ENCODE measurements at regions of chr2 and their contacts with region 1.

Region 1: GRCh38 chr2:175251425-175252041 is 70.0 kb upstream of the ATP5MC3 start:
- DNase-seq: no peak
- H3K4me3 ChIP-seq: no peak overlapping the region
- H3K27ac ChIP-seq: no peak overlapping the region
- H3K27me3 ChIP-seq: peaks cover 14% of the 10 kb centered on the region
- CTCF ChIP-seq: peak; percentile 76

Region 2: DNA sequence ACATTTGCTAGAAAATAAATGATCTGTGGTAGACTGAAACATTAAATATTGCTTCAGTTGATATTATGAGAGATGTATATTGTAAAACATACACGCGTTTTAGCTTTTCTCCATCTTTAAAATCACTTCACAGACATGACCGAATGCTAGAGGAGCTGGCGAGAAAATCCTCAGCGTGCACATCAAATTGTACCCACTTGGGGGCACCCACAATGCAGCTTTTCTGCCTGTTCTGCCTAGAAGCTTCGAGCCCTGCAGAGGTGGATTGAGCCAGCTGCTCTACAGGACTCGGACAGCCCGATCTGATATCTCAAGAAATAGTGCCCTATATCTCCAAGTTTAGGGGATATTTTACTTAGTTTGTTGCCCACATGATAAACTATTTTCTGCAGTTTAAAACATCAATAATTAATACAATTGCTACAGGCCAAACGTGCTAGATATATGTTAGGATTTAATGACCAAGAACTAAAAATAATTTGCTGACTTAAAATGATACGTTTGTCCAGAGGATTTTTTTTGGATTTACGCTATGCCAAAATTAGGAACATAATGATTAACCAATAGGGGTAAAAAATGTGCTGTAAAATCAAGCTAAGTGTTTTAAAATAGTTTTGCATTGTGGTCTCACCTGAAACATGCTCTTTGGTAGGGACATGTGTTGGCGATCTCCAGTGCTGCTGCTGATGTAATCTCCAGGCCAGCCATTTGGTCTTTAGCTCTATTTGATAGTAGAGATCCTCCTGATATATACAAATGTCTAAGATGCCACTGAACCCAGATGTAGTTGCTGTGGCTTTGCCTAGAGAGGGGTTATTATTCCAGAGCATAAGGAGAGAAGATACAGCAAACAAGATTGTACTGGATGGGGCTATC is 47.7 kb before region 1 on chr2:
- CTCF ChIA-PET with region 1: interaction called, 42 read pairs
- POLR2A ChIA-PET with region 1: no interaction called
- DNase-seq: peak; percentile 24
- H3K4me3 ChIP-seq: no peak overlapping the region
- H3K27ac ChIP-seq: no peak overlapping the region
- H3K27me3 ChIP-seq: peaks cover 6% of the 10 kb centered on the region
- CTCF ChIP-seq: peak; percentile 76

Region 3: DNA sequence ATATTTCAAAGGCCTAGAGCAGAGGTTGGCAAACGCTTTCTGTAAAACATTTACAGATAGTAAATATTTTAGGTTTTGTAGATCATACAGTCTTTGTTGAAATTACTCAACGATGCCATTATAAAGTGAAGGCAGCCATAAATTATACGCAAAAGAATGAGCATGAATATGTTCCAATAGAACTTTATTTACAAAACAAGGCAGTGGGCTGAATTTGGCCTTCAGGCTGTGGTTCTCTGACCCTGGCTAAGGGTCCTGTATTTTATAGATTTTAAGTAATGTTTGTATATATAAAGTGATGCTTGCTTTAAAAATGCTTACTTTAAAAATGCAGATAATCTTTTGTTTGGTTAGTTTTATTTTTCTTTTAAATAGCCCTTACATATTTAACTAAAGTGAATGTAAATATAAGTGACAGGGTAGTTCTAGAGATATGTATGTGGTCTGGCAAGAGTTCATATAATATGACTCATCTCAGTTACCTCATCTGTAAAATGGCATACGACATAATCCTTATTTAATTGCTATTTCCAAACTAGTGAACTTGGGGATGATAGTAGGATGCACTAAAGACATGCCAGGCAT is 18.3 kb before region 1 on chr2:
- CTCF ChIA-PET with region 1: interaction called, 75 read pairs
- POLR2A ChIA-PET with region 1: interaction called, 5 read pairs
- DNase-seq: peak; percentile 72
- H3K4me3 ChIP-seq: no peak overlapping the region
- H3K27ac ChIP-seq: no peak overlapping the region
- H3K27me3 ChIP-seq: no peaks in the 10 kb centered on the region
- CTCF ChIP-seq: no peak

Region 4: GRCh38 chr2:175282290-175282689 is 30.8 kb after region 1 on chr2:
- CTCF ChIA-PET with region 1: interaction called, 70 read pairs
- POLR2A ChIA-PET with region 1: no interaction called
- DNase-seq: no peak
- H3K4me3 ChIP-seq: no peak overlapping the region
- H3K27ac ChIP-seq: no peak overlapping the region
- H3K27me3 ChIP-seq: peaks cover 8% of the 10 kb centered on the region
- CTCF ChIP-seq: peak; percentile 60

Region 5: GRCh38 chr2:176096986-176097819 is 845.7 kb after region 1 on chr2:
- CTCF ChIA-PET with region 1: interaction called, 43 read pairs
- POLR2A ChIA-PET with region 1: no interaction called
- DNase-seq: peak; percentile 10
- H3K4me3 ChIP-seq: peak overlapping the region; percentile 49
- H3K27ac ChIP-seq: no peak overlapping the region
- H3K27me3 ChIP-seq: peaks cover 93% of the 10 kb centered on the region
- CTCF ChIP-seq: peak; percentile 85

Measured in AG04450 (cell line).